B cell (primary cell): ENCODE measurements at regions of chr6 and their contacts with region 1.

Region 1: GRCh38 chr6:26196846-26197648 is 109.8 kb downstream of the HFE start:
- DNase-seq: peak; percentile 95
- ATAC-seq: peak; percentile 55
- H3K4me3 ChIP-seq: peak overlapping the region; percentile 78 to 100 (median 90)
- H3K4me3 Mint-ChIP-seq: peak overlapping the region; percentile 91
- H3K27ac ChIP-seq: peak overlapping the region; percentile 78 to 95
- H3K27ac Mint-ChIP-seq: peak overlapping the region; percentile 96
- H3K4me1 ChIP-seq: peaks cover 16 to 31% of the 10 kb centered on the region in 2 donors
- H3K4me1 Mint-ChIP-seq: peaks cover 41% of the 10 kb centered on the region
- H3K27me3 ChIP-seq: no peaks in the 10 kb centered on the region
- H3K27me3 Mint-ChIP-seq: no peaks in the 10 kb centered on the region
- CTCF ChIP-seq: no peak

Region 2: GRCh38 chr6:26025894-26026832 is 170.9 kb before region 1 on chr6:
- CTCF ChIA-PET with region 1: interaction called, 7 read pairs
- POLR2A ChIA-PET with region 1: interaction called, 28 read pairs
- intact Hi-C with region 1: loop called (anchors 2 kb)
- DNase-seq: peak; percentile 97
- ATAC-seq: peak; percentile 35
- H3K4me3 ChIP-seq: peak overlapping the region; percentile 58 to 99 (median 88)
- H3K4me3 Mint-ChIP-seq: peak overlapping the region; percentile 98
- H3K27ac ChIP-seq: peak overlapping the region; percentile 88 to 97
- H3K27ac Mint-ChIP-seq: peak overlapping the region; percentile 98
- H3K4me1 ChIP-seq: peaks cover 23 to 32% of the 10 kb centered on the region in 2 donors
- H3K4me1 Mint-ChIP-seq: peaks cover 49% of the 10 kb centered on the region
- H3K27me3 ChIP-seq: no peaks in the 10 kb centered on the region
- H3K27me3 Mint-ChIP-seq: no peaks in the 10 kb centered on the region
- CTCF ChIP-seq: peak; percentile 92

Region 3: DNA sequence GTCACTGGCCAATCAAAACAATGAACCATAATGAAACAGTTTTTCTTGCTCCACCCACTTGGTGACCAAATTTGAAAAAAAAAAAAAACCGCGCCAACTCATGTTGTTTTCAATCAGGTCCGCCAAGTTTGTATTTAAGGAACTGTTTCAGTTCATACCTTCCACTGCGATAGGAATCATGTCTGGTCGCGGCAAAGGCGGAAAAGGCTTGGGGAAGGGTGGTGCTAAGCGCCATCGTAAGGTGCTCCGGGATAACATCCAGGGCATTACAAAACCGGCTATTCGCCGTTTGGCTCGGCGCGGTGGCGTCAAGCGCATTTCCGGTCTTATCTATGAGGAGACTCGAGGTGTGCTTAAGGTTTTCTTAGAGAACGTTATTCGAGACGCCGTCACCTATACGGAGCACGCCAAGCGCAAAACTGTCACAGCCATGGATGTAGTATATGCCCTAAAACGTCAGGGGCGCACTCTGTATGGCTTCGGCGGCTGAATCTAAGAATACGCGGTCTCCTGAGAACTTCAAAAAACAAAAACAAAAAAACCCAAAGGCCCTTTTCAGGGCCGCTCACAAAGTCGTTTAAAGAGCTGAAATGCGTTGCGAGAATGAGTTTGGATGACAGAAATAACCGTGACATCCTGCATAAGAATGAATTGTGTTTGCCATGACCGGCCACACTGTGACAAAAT is 93.1 kb before region 1 on chr6:
- CTCF ChIA-PET with region 1: interaction called, 3 read pairs
- POLR2A ChIA-PET with region 1: interaction called, 14 read pairs
- intact Hi-C with region 1: no loop called
- DNase-seq: peak; percentile 98
- ATAC-seq: peak; percentile 87
- H3K4me3 ChIP-seq: peak overlapping the region; percentile 52 to 81 (median 62)
- H3K4me3 Mint-ChIP-seq: peak overlapping the region; percentile 88
- H3K27ac ChIP-seq: peak overlapping the region; percentile 78 to 79
- H3K27ac Mint-ChIP-seq: peak overlapping the region; percentile 99
- H3K4me1 ChIP-seq: peaks cover 5 to 15% of the 10 kb centered on the region in 2 donors
- H3K4me1 Mint-ChIP-seq: peaks cover 15% of the 10 kb centered on the region
- H3K27me3 ChIP-seq: no peaks in the 10 kb centered on the region
- H3K27me3 Mint-ChIP-seq: no peaks in the 10 kb centered on the region
- CTCF ChIP-seq: peak; percentile 66

Region 4: DNA sequence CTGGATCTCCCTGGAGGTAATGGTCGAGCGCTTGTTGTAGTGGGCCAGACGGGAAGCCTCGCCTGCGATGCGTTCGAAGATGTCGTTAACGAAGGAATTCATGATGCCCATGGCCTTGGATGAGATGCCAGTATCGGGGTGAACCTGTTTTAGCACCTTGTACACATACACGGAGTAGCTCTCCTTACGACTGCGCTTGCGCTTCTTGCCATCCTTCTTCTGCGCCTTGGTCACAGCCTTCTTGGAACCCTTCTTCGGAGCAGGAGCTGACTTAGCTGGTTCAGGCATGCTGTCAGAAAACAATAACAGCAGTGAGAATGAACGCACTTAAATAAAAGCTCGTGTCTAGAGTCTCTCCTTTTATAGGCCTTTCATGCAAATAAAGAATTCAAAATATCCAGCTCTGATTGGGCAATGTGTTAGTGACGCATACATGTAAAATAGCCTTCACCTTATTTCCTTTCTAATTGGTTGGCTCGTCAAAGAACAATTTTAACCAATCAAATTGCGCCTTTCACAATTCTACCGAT is 19.4 kb after region 1 on chr6:
- CTCF ChIA-PET with region 1: interaction called, 40 read pairs
- POLR2A ChIA-PET with region 1: interaction called, 206 read pairs
- intact Hi-C with region 1: loop called (anchors 1 kb)
- DNase-seq: peak; percentile 96
- ATAC-seq: peak; percentile 80
- H3K4me3 ChIP-seq: peak overlapping the region; percentile 70 to 93 (median 74)
- H3K4me3 Mint-ChIP-seq: no peak overlapping the region
- H3K27ac ChIP-seq: peak overlapping the region; percentile 81 to 82
- H3K27ac Mint-ChIP-seq: no peak overlapping the region
- H3K4me1 ChIP-seq: peaks cover 15 to 26% of the 10 kb centered on the region in 2 donors
- H3K4me1 Mint-ChIP-seq: peaks cover 19% of the 10 kb centered on the region
- H3K27me3 ChIP-seq: no peaks in the 10 kb centered on the region
- H3K27me3 Mint-ChIP-seq: no peaks in the 10 kb centered on the region
- CTCF ChIP-seq: no peak

Region 5: GRCh38 chr6:26270903-26271667 is 74.0 kb after region 1 on chr6:
- CTCF ChIA-PET with region 1: interaction called, 31 read pairs
- POLR2A ChIA-PET with region 1: interaction called, 73 read pairs
- intact Hi-C with region 1: no loop called
- DNase-seq: peak; percentile 90
- ATAC-seq: peak; percentile 19
- H3K4me3 ChIP-seq: peak overlapping the region; percentile 63 to 88 (median 75)
- H3K4me3 Mint-ChIP-seq: no peak overlapping the region
- H3K27ac ChIP-seq: peak overlapping the region; percentile 79 to 86
- H3K27ac Mint-ChIP-seq: no peak overlapping the region
- H3K4me1 ChIP-seq: peaks cover 15 to 37% of the 10 kb centered on the region in 2 donors
- H3K4me1 Mint-ChIP-seq: peaks cover 20% of the 10 kb centered on the region
- H3K27me3 ChIP-seq: no peaks in the 10 kb centered on the region
- H3K27me3 Mint-ChIP-seq: no peaks in the 10 kb centered on the region
- CTCF ChIP-seq: no peak

Region 6: GRCh38 chr6:27132532-27133280 is 935.7 kb after region 1 on chr6:
- CTCF ChIA-PET with region 1: no interaction called
- POLR2A ChIA-PET with region 1: interaction called, 17 read pairs
- intact Hi-C with region 1: no loop called
- DNase-seq: no peak
- ATAC-seq: peak; percentile 84
- H3K4me3 ChIP-seq: peak overlapping the region; percentile 70 to 81 (median 74)
- H3K4me3 Mint-ChIP-seq: no peak overlapping the region
- H3K27ac ChIP-seq: peak overlapping the region; percentile 83
- H3K27ac Mint-ChIP-seq: no peak overlapping the region
- H3K4me1 ChIP-seq: peaks cover 14 to 24% of the 10 kb centered on the region in 2 donors
- H3K4me1 Mint-ChIP-seq: peaks cover 23% of the 10 kb centered on the region
- H3K27me3 ChIP-seq: no peaks in the 10 kb centered on the region
- H3K27me3 Mint-ChIP-seq: no peaks in the 10 kb centered on the region
- CTCF ChIP-seq: no peak

Region 7: DNA sequence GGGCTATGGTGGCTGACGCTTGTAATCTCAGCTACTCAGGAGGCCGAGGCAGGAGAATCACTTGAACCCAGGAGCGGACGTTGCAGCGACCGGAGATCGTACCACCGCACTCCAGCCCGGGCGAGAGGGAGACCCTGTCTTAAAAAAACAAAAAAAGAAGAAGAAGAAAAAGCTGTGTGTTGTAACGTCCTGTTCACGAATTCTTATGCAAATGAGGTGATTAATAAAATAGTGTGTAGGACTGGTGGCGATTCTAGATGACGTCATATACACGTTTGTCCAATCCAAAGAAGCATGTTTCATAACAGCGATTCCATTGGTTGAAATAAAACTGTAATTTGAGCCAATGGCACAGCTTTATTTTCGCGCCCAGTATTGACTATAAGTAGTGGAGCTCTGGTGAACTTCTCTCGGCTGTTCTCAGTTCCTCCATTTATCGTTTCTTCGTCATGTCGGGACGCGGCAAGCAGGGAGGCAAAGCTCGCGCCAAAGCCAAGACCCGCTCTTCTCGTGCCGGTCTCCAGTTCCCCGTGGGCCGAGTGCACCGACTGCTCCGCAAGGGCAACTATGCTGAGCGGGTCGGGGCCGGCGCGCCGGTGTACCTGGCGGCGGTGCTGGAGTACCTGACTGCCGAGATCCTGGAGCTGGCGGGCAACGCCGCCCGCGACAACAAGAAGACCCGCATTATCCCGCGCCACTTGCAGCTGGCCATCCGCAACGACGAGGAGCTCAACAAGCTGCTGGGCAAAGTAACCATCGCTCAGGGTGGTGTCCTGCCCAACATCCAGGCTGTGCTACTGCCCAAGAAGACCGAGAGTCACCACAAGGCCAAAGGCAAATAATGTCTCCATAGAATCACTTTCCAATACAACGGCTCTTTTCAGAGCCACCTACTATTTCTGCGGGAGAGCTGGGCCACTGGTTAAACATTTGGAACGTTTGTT is 1668.1 kb after region 1 on chr6:
- CTCF ChIA-PET with region 1: interaction called, 3 read pairs
- POLR2A ChIA-PET with region 1: interaction called, 15 read pairs
- intact Hi-C with region 1: loop called (anchors 5 kb)
- DNase-seq: peak; percentile 97
- ATAC-seq: peak; percentile 80
- H3K4me3 ChIP-seq: peak overlapping the region; percentile 60 to 82 (median 69)
- H3K4me3 Mint-ChIP-seq: peak overlapping the region; percentile 97
- H3K27ac ChIP-seq: peak overlapping the region; percentile 81 to 83
- H3K27ac Mint-ChIP-seq: peak overlapping the region; percentile 97
- H3K4me1 ChIP-seq: peaks cover 13 to 35% of the 10 kb centered on the region in 2 donors
- H3K4me1 Mint-ChIP-seq: peaks cover 45% of the 10 kb centered on the region
- H3K27me3 ChIP-seq: no peaks in the 10 kb centered on the region
- H3K27me3 Mint-ChIP-seq: no peaks in the 10 kb centered on the region
- CTCF ChIP-seq: no peak